HEK293T (cell line): ENCODE measurements at regions of chr21 and their contacts with region 1.

Region 1: DNA sequence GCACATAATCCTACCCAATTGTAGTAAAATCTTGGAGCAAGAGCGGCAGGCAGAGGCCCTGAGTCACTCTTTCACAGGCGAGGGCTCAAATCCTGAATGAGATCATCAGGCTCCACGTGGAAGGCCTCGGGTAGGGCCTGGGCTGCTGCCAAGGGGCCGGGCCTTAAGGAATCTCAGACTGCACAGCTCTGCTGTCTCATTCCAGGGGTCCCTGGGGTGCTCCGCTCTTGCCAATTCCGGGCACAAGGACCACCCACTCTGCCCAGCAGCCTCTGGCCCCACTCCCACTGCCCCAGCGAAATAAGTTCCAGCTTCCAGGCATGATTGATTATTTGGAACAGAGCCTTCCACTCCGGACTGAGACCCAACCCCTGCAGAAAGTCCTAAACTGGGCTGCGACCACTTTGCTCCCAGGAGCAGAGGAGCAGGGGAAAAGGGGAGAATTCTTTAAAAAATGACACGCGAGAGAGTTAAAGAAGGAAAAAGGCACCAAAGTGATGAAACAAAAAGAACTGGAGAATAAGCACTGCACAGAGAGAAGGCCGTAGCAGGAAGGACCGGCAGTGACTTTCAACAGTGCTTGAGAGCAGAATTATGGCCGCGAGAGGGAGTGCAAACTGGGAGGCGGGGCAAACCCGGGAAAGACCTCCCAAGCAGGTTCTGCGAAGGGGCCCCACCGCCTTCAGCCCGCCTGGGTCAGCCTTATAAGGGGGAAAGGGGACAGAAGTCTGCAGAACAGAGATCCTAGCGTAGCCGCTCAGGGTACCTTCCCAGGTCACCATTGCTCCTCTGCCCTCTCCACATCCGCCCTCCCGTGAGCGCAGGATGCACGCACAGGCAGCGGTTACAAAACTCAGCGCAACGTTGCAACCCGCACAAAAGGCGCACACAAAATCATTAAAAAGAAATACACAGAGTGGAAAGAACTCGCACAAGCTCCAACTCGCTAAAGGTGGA is 2.0 kb downstream of the ADAMTS1 start:
- DNase-seq: peak; percentile 80

Region 2: DNA sequence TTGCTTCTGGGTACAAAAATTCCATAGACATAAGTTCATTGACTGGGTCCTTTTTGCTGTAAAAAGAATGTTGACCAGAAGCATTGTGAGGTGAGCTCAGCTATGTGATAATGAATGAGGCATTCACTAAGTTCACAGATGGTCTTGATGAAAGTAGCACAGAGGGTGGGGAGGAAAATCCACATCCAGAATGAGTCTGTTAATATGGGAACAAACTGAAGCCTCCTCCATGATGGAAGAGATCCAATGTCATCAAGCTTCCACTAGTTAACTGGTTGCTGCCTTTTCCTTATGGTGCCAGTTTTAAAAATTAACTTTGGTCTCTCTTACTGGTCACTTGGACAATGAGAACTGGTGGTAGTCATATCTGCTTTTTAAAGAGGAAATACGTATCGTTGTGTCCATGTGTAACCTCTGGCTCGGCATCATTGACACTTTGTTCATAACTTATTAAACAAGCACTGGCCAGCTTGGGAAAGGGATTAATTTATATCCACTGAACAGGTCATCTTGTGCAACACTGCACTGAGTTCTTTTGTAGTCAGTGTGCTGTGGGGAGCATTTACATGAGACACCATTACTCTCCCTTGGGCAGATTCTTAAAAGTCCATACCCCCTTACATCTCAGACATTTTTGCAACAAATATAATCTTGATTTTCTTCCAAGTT is 86.6 kb before region 1 on chr21:
- CTCF ChIA-PET with region 1: no interaction called
- POLR2A ChIA-PET with region 1: interaction called, 10 read pairs
- DNase-seq: no peak

Region 3: GRCh38 chr21:26815197-26815596 is 28.1 kb before region 1 on chr21:
- CTCF ChIA-PET with region 1: no interaction called
- POLR2A ChIA-PET with region 1: interaction called, 14 read pairs
- DNase-seq: no peak